Sigmoid colon (tissue), 7 donors: ENCODE measurements at regions of chr17 and their contacts with region 1.

Region 1: GRCh38 chr17:45584092-45585036 is 93.8 kb upstream of the PLEKHM1 start:
- DNase-seq: peak; percentile 77
- H3K4me3 ChIP-seq: peak overlapping the region; percentile 47 to 84 (median 70)
- H3K27ac ChIP-seq: peak overlapping the region; percentile 77 to 87 (median 82)
- H3K4me1 ChIP-seq: peaks cover 0 to 28% (median 15%) of the 10 kb centered on the region in 4 donors
- H3K27me3 ChIP-seq: no peaks in the 10 kb centered on the region
- CTCF ChIP-seq: no peak
- EP300 ChIP-seq: no peak
- POLR2A ChIP-seq: no peak

Region 2: GRCh38 chr17:46266656-46267544 is 682.5 kb after region 1 on chr17:
- intact Hi-C with region 1: loop called (anchors 5 kb)
- DNase-seq: peak; percentile 91
- H3K4me3 ChIP-seq: peak overlapping the region; percentile 53 to 70 (median 64)
- H3K27ac ChIP-seq: peak overlapping the region; percentile 92 to 97 (median 96)
- H3K4me1 ChIP-seq: peaks cover 0 to 19% (median 15%) of the 10 kb centered on the region in 4 donors
- H3K27me3 ChIP-seq: no peaks in the 10 kb centered on the region
- CTCF ChIP-seq: peak in 1 of 4 experiments; percentile 11
- EP300 ChIP-seq: no peak
- POLR2A ChIP-seq: peak; percentile 23 to 33